ENCODE measurements at regions of chr12 and their contacts with region 1.

Region 1: DNA sequence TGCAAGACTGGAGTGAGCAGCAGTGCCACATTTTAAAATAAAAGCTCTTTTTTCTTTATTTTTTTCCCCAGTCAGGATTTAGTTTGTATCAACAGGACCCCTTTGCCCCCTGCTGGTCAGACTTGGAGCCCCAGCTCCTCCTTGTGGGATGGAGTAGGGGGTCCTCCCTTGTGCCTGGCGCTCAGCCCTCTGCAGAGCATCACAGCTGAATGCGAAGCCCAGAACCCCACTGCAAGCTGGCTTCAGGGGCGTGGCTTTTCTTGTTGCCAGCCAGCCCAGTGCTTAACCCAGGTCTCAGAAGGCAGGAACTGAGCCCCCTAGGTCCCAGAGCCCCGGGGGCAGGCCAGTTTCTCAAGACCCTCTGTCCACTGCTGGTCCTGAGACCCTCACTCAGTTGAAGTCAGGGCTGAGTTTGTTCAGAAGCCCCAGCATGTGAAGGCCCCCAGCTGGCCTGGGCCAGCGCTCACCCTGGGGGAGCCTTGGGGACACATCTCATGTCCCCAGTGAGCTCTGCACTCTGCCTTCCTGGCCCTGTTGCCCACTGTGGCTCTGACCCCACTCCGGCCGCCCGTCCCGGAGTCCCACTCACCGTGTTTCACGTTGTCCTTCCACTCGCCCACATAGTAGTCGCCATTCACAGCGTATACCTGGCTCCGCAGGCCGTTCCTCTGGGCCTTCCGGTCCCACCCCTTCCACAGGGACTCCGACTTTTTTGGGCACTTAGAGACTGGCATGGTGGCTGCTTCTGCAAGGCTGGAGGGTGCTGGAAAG is 519 bp downstream of the MORN3 start:
- DNase-seq: no peak
- H3K4me3 ChIP-seq: no peak overlapping the region
- CTCF ChIP-seq: peak; percentile 61

Region 2: DNA sequence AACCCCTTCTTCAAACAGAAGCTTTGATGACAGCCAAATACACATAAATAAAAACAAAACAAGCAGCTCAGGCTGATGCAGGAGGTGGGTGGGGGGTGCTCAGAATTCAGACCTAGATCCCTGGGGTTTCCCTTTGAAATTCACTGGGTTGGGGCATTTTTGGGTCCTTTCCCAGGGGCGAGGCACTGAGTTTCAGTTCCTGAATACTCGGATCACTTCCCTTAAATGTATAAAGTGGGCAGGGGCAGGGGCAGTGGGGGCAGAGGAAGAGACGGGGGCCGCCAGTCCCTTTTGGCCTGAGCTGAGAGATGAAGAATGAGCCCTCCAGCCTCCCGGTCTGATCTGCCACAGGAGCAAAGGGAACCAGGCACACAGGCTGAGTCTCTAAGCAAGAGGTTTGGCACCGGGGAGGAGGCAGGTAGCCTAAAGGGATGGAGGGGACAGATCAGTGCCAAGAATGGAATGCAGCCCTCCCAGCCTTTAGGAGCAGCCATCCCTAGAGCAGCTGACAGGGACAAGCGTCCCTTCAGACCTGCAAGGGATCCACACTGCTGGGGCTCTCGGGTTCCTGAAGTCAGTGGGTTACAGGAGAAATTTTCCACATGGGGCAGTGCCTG is 108.4 kb before region 1 on chr12:
- CTCF ChIA-PET with region 1: interaction called, 287 read pairs
- POLR2A ChIA-PET with region 1: no interaction called
- DNase-seq: no peak
- H3K4me3 ChIP-seq: no peak overlapping the region
- CTCF ChIP-seq: no peak

Region 3: GRCh38 chr12:121579981-121580868 is 88.7 kb before region 1 on chr12:
- CTCF ChIA-PET with region 1: interaction called, 10 read pairs
- POLR2A ChIA-PET with region 1: no interaction called
- DNase-seq: no peak
- H3K4me3 ChIP-seq: peak overlapping the region; percentile 61
- CTCF ChIP-seq: no peak

Region 4: DNA sequence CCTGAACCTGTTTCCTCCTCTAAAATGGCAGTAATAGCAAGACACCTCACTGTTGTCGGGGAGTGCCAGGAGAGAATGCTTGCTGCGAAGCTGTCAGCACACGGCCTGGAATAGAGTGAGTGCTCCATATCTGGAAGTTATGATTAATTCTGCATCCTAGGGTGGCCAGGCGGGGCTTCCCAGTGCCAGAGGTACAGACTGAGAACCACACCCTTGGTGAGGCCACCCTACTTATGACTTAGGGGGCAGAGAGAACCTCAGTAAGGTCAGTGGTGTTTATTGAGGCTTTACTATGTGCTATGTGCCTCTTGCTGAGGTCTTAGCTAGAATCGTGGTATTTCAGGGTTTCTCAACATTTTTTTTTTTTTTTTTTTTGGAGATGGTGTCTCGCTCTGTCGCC is 19.6 kb before region 1 on chr12:
- CTCF ChIA-PET with region 1: interaction called, 13 read pairs
- POLR2A ChIA-PET with region 1: no interaction called
- DNase-seq: no peak
- H3K4me3 ChIP-seq: no peak overlapping the region
- CTCF ChIP-seq: no peak

Region 5: GRCh38 chr12:121678716-121679580 is 10.0 kb after region 1 on chr12:
- CTCF ChIA-PET with region 1: interaction called, 66 read pairs
- POLR2A ChIA-PET with region 1: no interaction called
- DNase-seq: no peak
- H3K4me3 ChIP-seq: no peak overlapping the region
- CTCF ChIP-seq: no peak

Region 6: GRCh38 chr12:121738340-121738858 is 69.5 kb after region 1 on chr12:
- CTCF ChIA-PET with region 1: no interaction called
- POLR2A ChIA-PET with region 1: no interaction called
- DNase-seq: no peak
- H3K4me3 ChIP-seq: no peak overlapping the region
- CTCF ChIP-seq: no peak

Region 7: DNA sequence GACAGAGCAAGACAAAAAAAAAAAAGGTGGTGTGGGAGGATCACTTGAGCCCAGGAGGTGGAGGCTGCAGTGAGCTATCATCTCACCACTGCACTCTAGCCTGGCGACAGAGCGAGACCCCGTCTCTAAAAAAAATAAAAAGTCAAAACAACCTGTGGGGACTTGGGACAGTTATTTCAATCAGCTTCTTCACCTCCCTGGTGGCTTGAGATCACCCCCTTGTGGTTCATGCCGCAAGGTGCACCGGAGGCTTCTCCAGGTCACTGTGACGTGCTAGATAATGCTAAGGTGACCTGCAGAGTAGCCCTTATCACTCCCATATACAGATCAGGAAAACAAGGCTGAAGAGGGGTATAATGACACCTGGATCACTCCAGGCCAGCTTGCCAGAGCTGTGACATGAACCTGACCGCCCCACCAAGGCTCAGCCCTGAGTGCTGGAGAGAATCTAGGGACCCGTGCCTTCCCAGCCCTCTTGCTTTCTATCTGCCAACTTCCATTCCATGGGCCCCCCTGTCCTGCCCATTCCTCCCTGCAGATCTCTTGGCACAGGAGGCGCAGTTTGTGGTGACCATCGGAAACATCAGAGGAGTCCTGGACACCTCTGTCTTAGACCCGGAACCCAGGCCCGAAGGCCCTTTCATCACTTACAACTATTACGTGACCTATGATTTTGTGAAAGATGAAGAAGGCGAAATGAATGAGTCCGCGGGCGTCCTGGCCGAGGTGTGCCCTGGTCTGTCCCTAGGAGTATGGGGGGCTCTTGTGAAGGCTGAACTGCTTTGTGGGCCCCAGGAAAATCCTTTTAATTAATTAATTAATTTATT is 522.1 kb after region 1 on chr12:
- CTCF ChIA-PET with region 1: no interaction called
- POLR2A ChIA-PET with region 1: no interaction called
- DNase-seq: no peak
- H3K4me3 ChIP-seq: no peak overlapping the region
- CTCF ChIP-seq: peak; percentile 80

Measured in AG04449 (cell line).